B cell (primary cell): ENCODE measurements at regions of chr5 and their contacts with region 1.

Region 1: DNA sequence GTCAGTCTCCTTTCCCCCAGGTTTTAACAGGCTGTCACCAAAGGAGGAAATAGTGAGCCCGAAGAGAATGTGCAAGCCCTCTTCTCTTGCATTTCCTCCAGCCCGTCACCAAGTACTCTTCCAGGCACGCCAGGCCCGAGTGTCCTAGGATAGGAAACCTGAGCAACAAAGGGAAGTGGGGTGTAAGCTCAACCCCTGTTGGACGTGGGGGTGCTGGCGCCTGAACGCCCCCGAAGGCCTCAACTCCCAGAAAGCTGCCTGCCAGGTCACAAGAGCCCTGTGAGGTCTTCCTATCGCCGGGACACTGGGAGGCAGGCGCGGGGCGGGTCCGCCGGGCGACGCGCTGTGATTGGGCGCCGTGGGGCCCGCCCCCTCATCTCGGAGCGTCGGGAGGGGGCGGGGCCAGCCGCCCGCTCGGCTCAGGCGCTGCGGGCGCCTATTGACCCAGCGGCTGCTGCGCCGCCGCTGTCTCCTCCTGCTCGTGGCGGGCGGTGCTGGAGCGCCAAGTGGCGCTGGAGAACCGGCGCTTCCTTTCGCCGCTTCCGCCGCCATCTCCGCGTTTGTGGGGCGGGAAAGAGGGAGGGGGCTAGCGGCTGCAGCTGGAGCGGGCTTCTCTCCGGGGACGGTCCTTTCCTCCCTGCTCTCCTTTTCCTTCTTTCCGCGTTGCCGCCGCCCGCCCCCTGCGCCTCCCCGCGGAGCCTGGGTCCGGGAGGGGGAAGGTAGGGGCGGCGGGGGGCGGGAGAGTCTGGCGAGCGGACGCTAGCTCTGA is 572 bp upstream of the MAN2A1 start:
- DNase-seq: peak; percentile 94
- ATAC-seq: peak; percentile 80
- H3K4me3 ChIP-seq: peak overlapping the region; percentile 16 to 92 (median 88)
- H3K4me3 Mint-ChIP-seq: peak overlapping the region; percentile 85
- H3K27ac ChIP-seq: peak overlapping the region; percentile 90 to 91
- H3K27ac Mint-ChIP-seq: peak overlapping the region; percentile 81
- H3K4me1 ChIP-seq: peaks cover 25 to 28% of the 10 kb centered on the region in 2 donors
- H3K4me1 Mint-ChIP-seq: peaks cover 33% of the 10 kb centered on the region
- H3K27me3 ChIP-seq: no peaks in the 10 kb centered on the region
- H3K27me3 Mint-ChIP-seq: peaks cover 5% of the 10 kb centered on the region
- CTCF ChIP-seq: no peak

Region 2: DNA sequence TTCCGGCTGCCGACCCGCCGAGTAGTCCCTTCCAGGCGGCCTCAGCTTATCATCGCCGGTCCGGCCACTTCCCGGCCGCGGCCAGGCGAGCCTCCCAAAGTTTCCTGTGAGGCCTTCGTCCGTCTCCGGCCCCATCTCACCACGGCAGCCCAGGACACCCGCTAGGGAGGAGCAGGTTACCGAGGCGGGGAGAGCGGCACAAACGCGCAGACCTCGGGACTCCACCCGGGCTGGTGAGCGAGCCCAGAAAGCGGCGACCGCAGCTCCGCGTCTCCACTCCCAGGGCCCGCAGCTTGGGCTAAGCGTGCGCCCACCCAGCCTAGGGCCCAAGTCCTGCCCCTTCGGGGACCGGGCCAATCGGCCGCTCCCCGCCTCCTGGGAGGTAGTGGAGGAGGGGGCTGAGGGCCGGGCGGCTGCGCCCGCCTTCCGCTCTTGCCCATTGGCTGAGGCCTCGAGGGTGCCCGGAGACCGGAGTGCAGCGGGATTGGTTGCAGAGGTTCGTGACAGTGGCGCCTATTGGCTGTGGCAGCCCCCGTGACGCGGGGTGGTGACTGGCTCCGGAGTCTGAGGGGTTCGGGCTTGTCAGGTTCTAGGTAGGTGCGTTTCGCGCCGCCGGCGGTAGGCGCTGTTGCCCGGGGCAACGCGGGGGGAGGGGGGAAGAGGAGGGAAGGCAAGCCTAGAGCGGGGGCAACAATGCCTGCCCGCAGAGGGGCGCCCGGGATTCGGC is 940.6 kb before region 1 on chr5:
- CTCF ChIA-PET with region 1: no interaction called
- POLR2A ChIA-PET with region 1: no interaction called
- intact Hi-C with region 1: loop called (anchors 1 kb)
- DNase-seq: peak; percentile 98
- ATAC-seq: peak; percentile 91
- H3K4me3 ChIP-seq: peak overlapping the region; percentile 74 to 90 (median 83)
- H3K4me3 Mint-ChIP-seq: peak overlapping the region; percentile 92
- H3K27ac ChIP-seq: peak overlapping the region; percentile 91 to 94
- H3K27ac Mint-ChIP-seq: peak overlapping the region; percentile 86
- H3K4me1 ChIP-seq: peaks cover 14 to 17% of the 10 kb centered on the region in 2 donors
- H3K4me1 Mint-ChIP-seq: peaks cover 10% of the 10 kb centered on the region
- H3K27me3 ChIP-seq: no peaks in the 10 kb centered on the region
- H3K27me3 Mint-ChIP-seq: no peaks in the 10 kb centered on the region
- CTCF ChIP-seq: no peak

Region 3: DNA sequence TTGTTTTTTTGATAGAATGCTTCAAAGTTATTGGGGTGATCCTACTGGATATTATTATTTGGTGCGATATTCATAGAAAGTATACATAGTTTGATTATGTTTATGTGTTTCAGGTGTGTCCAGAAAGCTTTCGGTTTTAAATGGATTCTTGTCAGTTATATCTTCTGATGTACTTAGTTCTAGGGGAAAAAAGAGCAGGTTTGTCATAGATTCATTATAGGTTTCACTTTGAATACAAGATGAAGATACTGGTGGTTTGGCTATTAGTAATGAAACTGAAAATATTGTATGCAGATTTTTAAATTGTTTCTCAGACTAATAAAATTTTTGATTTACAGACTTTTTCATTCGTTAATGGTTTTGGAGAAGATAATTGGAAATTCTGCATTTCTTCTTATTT is 99.4 kb after region 1 on chr5:
- CTCF ChIA-PET with region 1: no interaction called
- POLR2A ChIA-PET with region 1: no interaction called
- intact Hi-C with region 1: no loop called
- DNase-seq: no peak
- ATAC-seq: no peak
- H3K4me3 ChIP-seq: no peak overlapping the region
- H3K4me3 Mint-ChIP-seq: no peak overlapping the region
- H3K27ac ChIP-seq: no peak overlapping the region
- H3K27ac Mint-ChIP-seq: no peak overlapping the region
- H3K4me1 ChIP-seq: no peaks in the 10 kb centered on the region
- H3K4me1 Mint-ChIP-seq: no peaks in the 10 kb centered on the region
- H3K27me3 ChIP-seq: no peaks in the 10 kb centered on the region
- H3K27me3 Mint-ChIP-seq: no peaks in the 10 kb centered on the region
- CTCF ChIP-seq: no peak

Region 4: DNA sequence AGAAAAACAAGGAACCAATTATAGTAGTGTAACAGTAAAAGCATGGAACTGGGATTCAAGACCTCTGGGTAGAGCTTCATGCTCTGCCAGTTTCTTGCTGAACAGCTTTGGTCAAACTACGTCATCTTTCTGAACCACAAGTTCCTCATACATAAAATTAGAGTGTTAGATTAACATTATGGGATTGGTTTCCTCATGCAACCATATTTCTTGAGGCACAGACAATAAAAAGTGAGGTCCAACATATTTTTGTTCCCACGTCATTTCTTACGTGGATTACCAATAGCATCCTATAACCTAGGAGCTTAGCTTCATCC is 682.5 kb after region 1 on chr5:
- CTCF ChIA-PET with region 1: no interaction called
- POLR2A ChIA-PET with region 1: no interaction called
- intact Hi-C with region 1: loop called (anchors 5 kb)
- DNase-seq: peak; percentile 63
- ATAC-seq: peak; percentile 83
- H3K4me3 ChIP-seq: no peak overlapping the region
- H3K4me3 Mint-ChIP-seq: peak overlapping the region; percentile 67
- H3K27ac ChIP-seq: no peak overlapping the region
- H3K27ac Mint-ChIP-seq: peak overlapping the region; percentile 47
- H3K4me1 ChIP-seq: peaks cover 13 to 16% of the 10 kb centered on the region in 2 donors
- H3K4me1 Mint-ChIP-seq: peaks cover 21% of the 10 kb centered on the region
- H3K27me3 ChIP-seq: no peaks in the 10 kb centered on the region
- H3K27me3 Mint-ChIP-seq: peaks cover 2% of the 10 kb centered on the region
- CTCF ChIP-seq: no peak

Region 5: GRCh38 chr5:110738812-110739651 is 1049.9 kb after region 1 on chr5 and contains the start of gene SLC25A46:
- CTCF ChIA-PET with region 1: no interaction called
- POLR2A ChIA-PET with region 1: no interaction called
- intact Hi-C with region 1: loop called (anchors 5 kb)
- DNase-seq: peak; percentile 96
- ATAC-seq: peak; percentile 82
- H3K4me3 ChIP-seq: peak within 1 kb of the TSS; percentile 72 to 98 (median 92)
- H3K4me3 Mint-ChIP-seq: peak within 1 kb of the TSS; percentile 100
- H3K27ac ChIP-seq: peak within 1 kb of the TSS; percentile 83 to 97
- H3K27ac Mint-ChIP-seq: peak within 1 kb of the TSS; percentile 99
- H3K4me1 ChIP-seq: peaks cover 14 to 17% of the 10 kb centered on the region in 2 donors
- H3K4me1 Mint-ChIP-seq: peaks cover 29% of the 10 kb centered on the region
- H3K27me3 ChIP-seq: peaks cover 0 to 4% (median 0%) of the 10 kb centered on the region in 4 experiments
- H3K27me3 Mint-ChIP-seq: peaks cover 10% of the 10 kb centered on the region
- CTCF ChIP-seq: no peak
- total RNA-seq, gene SLC25A46: 36.9 and 38.0 TPM in 2 replicates

Region 6: GRCh38 chr5:111223889-111224563 is 1534.9 kb after region 1 on chr5 and contains the start of gene CAMK4:
- CTCF ChIA-PET with region 1: no interaction called
- POLR2A ChIA-PET with region 1: no interaction called
- intact Hi-C with region 1: loop called (anchors 10 kb)
- DNase-seq: peak; percentile 65
- ATAC-seq: peak; percentile 91
- H3K4me3 ChIP-seq: peak within 1 kb of the TSS; percentile 5 to 64 (median 56)
- H3K4me3 Mint-ChIP-seq: peak within 1 kb of the TSS; percentile 86
- H3K27ac ChIP-seq: no peak within 1 kb of the TSS
- H3K27ac Mint-ChIP-seq: peak within 1 kb of the TSS; percentile 37
- H3K4me1 ChIP-seq: peaks cover 13 to 16% of the 10 kb centered on the region in 2 donors
- H3K4me1 Mint-ChIP-seq: peaks cover 23% of the 10 kb centered on the region
- H3K27me3 ChIP-seq: peaks cover 0 to 21% (median 7%) of the 10 kb centered on the region in 4 experiments
- H3K27me3 Mint-ChIP-seq: peaks cover 36% of the 10 kb centered on the region
- CTCF ChIP-seq: no peak
- total RNA-seq, gene CAMK4: 4.8 and 5.2 TPM in 2 replicates